ENCODE measurements at regions of chr3 and their contacts with region 1.

Region 1: GRCh38 chr3:197511130-197511529 is 44.6 kb downstream of the BDH1 start:
- DNase-seq: no peak
- H3K4me3 ChIP-seq: no peak overlapping the region
- H3K27ac ChIP-seq: no peak overlapping the region
- H3K4me1 ChIP-seq: peaks cover 16% of the 10 kb centered on the region
- H3K27me3 ChIP-seq: no peaks in the 10 kb centered on the region
- CTCF ChIP-seq: no peak

Region 2: DNA sequence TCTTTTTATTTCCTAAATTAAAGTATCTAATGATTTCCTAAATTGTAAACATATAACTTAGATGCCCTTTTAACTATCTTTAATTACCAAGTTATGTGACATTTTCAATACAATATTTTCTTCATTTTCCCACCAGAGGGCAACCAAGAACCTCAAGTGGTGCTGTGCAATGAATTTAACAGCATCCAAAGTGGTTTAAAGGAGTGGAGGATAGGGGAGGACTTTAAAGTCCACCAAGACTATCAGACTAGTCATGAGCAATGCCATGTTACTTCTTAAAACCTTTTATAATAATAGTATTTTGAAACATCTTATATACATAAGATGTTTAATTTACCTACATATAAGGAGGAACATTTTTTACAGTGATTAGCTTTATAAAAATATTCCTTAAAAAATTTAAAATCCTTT is 287.1 kb before region 1 on chr3:
- CTCF ChIA-PET with region 1: interaction called, 3 read pairs
- POLR2A ChIA-PET with region 1: no interaction called
- intact Hi-C with region 1: loop called (anchors 1 kb)
- DNase-seq: peak; percentile 14 to 62
- H3K4me3 ChIP-seq: no peak overlapping the region
- H3K27ac ChIP-seq: no peak overlapping the region
- H3K4me1 ChIP-seq: peaks cover 12% of the 10 kb centered on the region; the same call in 1 of the 2 replicates
- H3K27me3 ChIP-seq: no peaks in the 10 kb centered on the region
- CTCF ChIP-seq: peak; percentile 91

Region 3: GRCh38 chr3:197949754-197950660 is 438.9 kb after region 1 on chr3 and contains the start of gene RPL35A:
- CTCF ChIA-PET with region 1: no interaction called
- POLR2A ChIA-PET with region 1: no interaction called
- intact Hi-C with region 1: no loop called
- DNase-seq: peak; percentile 91 to 96
- H3K4me3 ChIP-seq: peak within 1 kb of the TSS; percentile 94
- H3K27ac ChIP-seq: peak within 1 kb of the TSS; percentile 88
- H3K4me1 ChIP-seq: peaks cover 49% of the 10 kb centered on the region
- H3K27me3 ChIP-seq: no peaks in the 10 kb centered on the region
- CTCF ChIP-seq: 0 out of 2 replicates have a peak, but pooled peaks have one; percentile 4
- total RNA-seq, gene RPL35A: 1,816 and 1,880 TPM in 2 replicates